Ascending aorta (tissue), 2 donors: ENCODE measurements at regions of chr7 and their contacts with region 1.

Region 1: GRCh38 chr7:25069900-25070443 is 55.1 kb downstream of the CYCS start:
- DNase-seq: peak in 1 of 2 donors; percentile 68
- H3K4me3 ChIP-seq: peak overlapping the region; percentile 32 to 39
- H3K27ac ChIP-seq: no peak overlapping the region
- H3K4me1 ChIP-seq: no peaks in the 10 kb centered on the region
- H3K27me3 ChIP-seq: no peaks in the 10 kb centered on the region
- CTCF ChIP-seq: peak; percentile 66 to 84 (median 82)

Region 2: DNA sequence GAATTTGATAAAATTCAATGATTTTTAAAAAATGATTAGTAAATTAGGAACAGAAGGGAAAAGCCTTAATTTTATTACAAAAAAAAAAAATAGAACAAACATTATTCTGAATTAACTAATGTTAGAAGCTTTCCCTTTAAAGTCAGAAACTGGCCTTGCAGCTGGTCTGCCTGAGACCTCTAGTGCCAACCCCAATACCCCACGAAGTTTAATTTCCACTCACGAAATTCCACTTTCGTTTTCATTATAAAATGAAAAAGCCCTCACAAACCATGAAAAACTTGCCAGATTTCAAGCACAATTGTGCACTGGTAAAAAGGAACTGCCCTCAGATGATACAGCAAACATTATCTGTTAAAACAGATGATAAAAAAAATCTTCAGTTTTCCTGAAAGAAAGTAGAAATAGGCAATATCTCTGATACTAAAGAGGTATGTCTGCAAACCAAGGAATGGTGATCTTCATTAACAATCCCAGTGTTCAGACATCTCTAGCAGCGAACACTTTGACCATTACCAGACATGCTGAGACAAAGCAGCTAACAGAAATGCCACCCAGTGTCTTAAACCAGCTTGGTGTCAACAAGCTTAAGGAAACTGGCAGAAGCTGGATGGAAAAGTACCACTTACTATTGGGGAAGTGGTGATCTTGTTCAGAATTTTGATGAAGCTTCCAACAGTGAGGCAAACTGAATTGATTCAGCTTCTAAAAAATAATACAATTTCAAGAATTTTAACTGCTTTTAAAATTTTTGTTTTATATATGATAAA is 416.5 kb before region 1 on chr7:
- intact Hi-C with region 1: no loop called
- DNase-seq: no peak
- H3K4me3 ChIP-seq: peak overlapping the region; percentile 40 to 45
- H3K27ac ChIP-seq: peak overlapping the region in 1 of 2 donors; percentile 23
- H3K4me1 ChIP-seq: peaks cover 0 to 2% of the 10 kb centered on the region in 2 donors
- H3K27me3 ChIP-seq: no peaks in the 10 kb centered on the region
- CTCF ChIP-seq: no peak

Region 3: GRCh38 chr7:24812310-24812945 is 257.5 kb before region 1 on chr7:
- intact Hi-C with region 1: loop called (anchors 2 kb)
- DNase-seq: no peak
- H3K4me3 ChIP-seq: no peak overlapping the region
- H3K27ac ChIP-seq: no peak overlapping the region
- H3K4me1 ChIP-seq: no peaks in the 10 kb centered on the region
- H3K27me3 ChIP-seq: no peaks in the 10 kb centered on the region
- CTCF ChIP-seq: peak; percentile 63 to 86 (median 78)

Region 4: GRCh38 chr7:24819916-24820689 is 249.9 kb before region 1 on chr7:
- intact Hi-C with region 1: loop called (anchors 1 kb)
- DNase-seq: peak; percentile 23 to 86
- H3K4me3 ChIP-seq: no peak overlapping the region
- H3K27ac ChIP-seq: no peak overlapping the region
- H3K4me1 ChIP-seq: no peaks in the 10 kb centered on the region
- H3K27me3 ChIP-seq: no peaks in the 10 kb centered on the region
- CTCF ChIP-seq: peak; percentile 66 to 86 (median 77)